ENCODE measurements at regions of chrX and their contacts with region 1.

Region 1: GRCh38 chrX:19372170-19372546 is 28.4 kb downstream of the PDHA1 start:
- DNase-seq: peak; percentile 24
- H3K4me3 ChIP-seq: peak overlapping the region; percentile 55
- H3K27ac ChIP-seq: no peak overlapping the region
- H3K27me3 ChIP-seq: no peaks in the 10 kb centered on the region
- CTCF ChIP-seq: peak; percentile 78

Region 2: DNA sequence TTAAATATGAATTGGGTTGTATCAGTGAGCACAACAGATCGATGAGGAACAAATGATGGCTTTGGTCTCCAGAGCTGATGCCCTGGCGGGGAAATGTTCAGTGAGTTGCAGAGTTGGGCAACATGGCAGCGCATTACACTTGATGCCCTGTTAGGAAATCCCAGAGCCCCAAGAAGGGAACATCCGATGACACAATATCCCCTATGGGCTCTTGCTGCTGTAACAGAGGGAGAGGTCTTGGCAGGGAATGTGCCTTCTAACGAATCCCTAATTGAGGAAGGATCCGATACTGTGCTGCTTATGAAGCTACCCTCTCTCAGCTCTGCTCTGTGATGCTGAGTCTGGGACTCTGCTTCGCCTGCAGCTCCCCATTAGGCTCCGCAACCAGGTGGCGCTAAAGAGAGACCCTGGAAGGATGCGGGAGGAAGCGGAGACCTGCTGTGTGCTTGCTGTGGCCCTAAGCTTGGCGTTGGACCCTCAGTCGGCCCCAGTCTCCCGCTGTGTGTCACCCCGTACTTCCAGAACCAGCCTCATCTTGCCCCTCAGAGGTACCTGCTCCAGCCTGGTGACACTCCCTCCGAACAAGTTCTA is 10.5 kb after region 1 on chrX:
- CTCF ChIA-PET with region 1: interaction called, 12 read pairs
- POLR2A ChIA-PET with region 1: no interaction called
- DNase-seq: no peak
- H3K4me3 ChIP-seq: no peak overlapping the region
- H3K27ac ChIP-seq: no peak overlapping the region
- H3K27me3 ChIP-seq: no peaks in the 10 kb centered on the region
- CTCF ChIP-seq: peak; percentile 66

Region 3: GRCh38 chrX:19403696-19404095 is 31.5 kb after region 1 on chrX:
- CTCF ChIA-PET with region 1: no interaction called
- POLR2A ChIA-PET with region 1: no interaction called
- DNase-seq: no peak
- H3K4me3 ChIP-seq: no peak overlapping the region
- H3K27ac ChIP-seq: no peak overlapping the region
- H3K27me3 ChIP-seq: no peaks in the 10 kb centered on the region
- CTCF ChIP-seq: no peak

Region 4: DNA sequence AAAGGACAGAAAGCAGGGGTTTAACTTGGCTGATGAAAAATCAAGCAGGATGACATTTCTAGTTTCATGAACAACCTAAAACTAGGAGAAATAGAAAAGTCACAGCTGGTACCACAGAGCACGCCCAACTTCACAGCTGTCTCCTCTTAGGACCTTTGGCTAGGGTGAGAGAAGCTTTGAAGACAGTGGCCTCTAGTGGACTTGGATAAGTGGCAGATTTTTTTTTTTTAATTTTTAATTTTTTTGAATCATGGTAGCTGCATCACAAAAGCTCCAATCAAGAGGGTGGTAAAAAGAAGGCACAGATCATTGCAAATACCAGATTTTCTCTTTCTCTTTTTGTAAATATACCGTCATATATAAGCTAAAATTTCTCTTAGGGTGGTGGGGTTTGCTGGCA is 163.3 kb after region 1 on chrX:
- CTCF ChIA-PET with region 1: interaction called, 36 read pairs
- POLR2A ChIA-PET with region 1: no interaction called
- DNase-seq: no peak
- H3K4me3 ChIP-seq: no peak overlapping the region
- H3K27ac ChIP-seq: no peak overlapping the region
- H3K27me3 ChIP-seq: no peaks in the 10 kb centered on the region
- CTCF ChIP-seq: peak; percentile 51